Caco-2 (cell line): ENCODE measurements at regions of chr4 and their contacts with region 1.

Region 1: GRCh38 chr4:68283714-68284113 is 38.2 kb upstream of the TMPRSS11B start:
- DNase-seq: no peak
- H3K4me3 ChIP-seq: no peak overlapping the region
- H3K4me3 Mint-ChIP-seq: no peak overlapping the region
- H3K27ac Mint-ChIP-seq: peak overlapping the region; percentile 82
- H3K4me1 ChIP-seq: peaks cover 41% of the 10 kb centered on the region
- H3K4me1 Mint-ChIP-seq: peaks cover 19% of the 10 kb centered on the region
- H3K27me3 ChIP-seq: no peaks in the 10 kb centered on the region
- H3K27me3 Mint-ChIP-seq: no peaks in the 10 kb centered on the region
- CTCF ChIP-seq: no peak

Region 2: GRCh38 chr4:68368691-68369480 is 85.2 kb after region 1 on chr4:
- CTCF ChIA-PET with region 1: no interaction called
- POLR2A ChIA-PET with region 1: no interaction called
- intact Hi-C with region 1: loop called (anchors 1 kb)
- DNase-seq: peak; percentile 61 to 73
- H3K4me3 ChIP-seq: no peak overlapping the region
- H3K4me3 Mint-ChIP-seq: peak overlapping the region; percentile 47
- H3K27ac Mint-ChIP-seq: peak overlapping the region; percentile 94
- H3K4me1 ChIP-seq: peaks cover 27% of the 10 kb centered on the region
- H3K4me1 Mint-ChIP-seq: peaks cover 17% of the 10 kb centered on the region
- H3K27me3 ChIP-seq: no peaks in the 10 kb centered on the region
- H3K27me3 Mint-ChIP-seq: no peaks in the 10 kb centered on the region
- CTCF ChIP-seq: no peak